Psoas muscle (tissue), 8 donors: ENCODE measurements at regions of chr12 and their contacts with region 1.

Region 1: GRCh38 chr12:107884769-107885694 is 110.5 kb downstream of the ASCL4 start:
- DNase-seq: peak in 1 of 2 donors; percentile 31
- ATAC-seq: no peak
- H3K4me3 ChIP-seq: no peak overlapping the region
- H3K27ac ChIP-seq: no peak overlapping the region
- H3K4me1 ChIP-seq: no peaks in the 10 kb centered on the region
- H3K27me3 ChIP-seq: peaks cover 0 to 3% (median 0%) of the 10 kb centered on the region in 3 donors
- CTCF ChIP-seq: peak; percentile 47

Region 2: DNA sequence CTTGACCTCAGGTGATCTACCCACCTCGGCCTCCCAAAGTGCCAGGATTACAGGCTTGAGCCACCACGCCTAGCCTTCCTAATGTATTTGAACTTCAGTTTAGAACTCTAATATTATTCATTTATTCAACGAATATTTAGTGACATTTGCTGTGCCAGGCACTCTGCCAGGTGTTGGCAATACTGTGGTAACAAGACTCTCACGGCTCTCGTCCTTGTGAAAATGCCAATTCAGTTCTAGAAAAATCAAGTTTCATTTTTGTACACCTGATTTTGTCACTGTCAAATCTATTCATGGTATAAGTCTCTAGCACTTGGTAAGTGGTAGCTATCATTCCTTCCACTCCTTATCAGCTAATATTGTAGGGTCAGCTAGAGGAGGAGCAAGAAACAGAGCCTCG is 205.7 kb before region 1 on chr12:
- intact Hi-C with region 1: loop called in 1 of 2 experiments (anchors 5 kb)
- DNase-seq: no peak
- ATAC-seq: no peak
- H3K4me3 ChIP-seq: no peak overlapping the region
- H3K27ac ChIP-seq: no peak overlapping the region
- H3K4me1 ChIP-seq: no peaks in the 10 kb centered on the region
- H3K27me3 ChIP-seq: peaks cover 0 to 13% (median 0%) of the 10 kb centered on the region in 3 donors
- CTCF ChIP-seq: no peak

Region 3: DNA sequence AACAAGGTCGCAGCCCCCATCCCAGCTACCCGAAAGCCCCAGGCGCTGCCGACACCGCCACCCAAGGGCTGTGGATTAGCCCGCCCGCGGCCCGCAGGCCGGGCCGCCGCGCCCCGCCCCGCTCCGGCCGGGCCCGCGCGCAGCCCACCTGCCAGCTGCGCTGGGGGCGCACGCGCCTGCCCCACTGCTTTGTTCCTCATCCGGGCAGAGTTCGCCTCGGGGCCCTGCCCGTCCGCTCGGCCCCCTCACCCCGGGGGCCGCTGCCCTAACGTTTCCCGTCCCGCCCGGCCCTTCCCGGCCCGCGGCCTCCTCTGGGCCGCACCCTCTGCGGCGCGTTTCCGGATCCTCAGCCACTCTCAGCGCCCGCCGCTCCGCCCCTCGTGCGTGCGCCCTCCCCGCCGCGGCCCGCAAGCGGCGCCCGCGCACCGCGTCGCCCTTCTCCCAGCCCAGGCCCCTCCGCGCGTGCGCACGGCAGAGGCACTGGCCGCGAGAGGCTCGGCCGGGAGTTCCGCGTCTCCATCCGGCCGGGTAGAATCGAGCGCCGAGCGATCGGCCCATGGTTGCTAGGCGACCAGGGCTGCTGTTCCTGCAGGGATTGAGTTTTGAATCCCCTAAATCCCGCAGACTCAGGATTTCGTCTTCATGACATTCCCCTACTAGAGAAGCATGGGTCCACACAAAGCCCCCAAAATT is 124.1 kb before region 1 on chr12 and contains the start of gene PRDM4:
- intact Hi-C with region 1: loop called in 1 of 2 experiments (anchors 10 kb)
- DNase-seq: peak; percentile 96 to 97
- ATAC-seq: peak; percentile 100
- H3K4me3 ChIP-seq: peak within 1 kb of the TSS; percentile 81
- H3K27ac ChIP-seq: peak within 1 kb of the TSS; percentile 77
- H3K4me1 ChIP-seq: peaks cover 22% of the 10 kb centered on the region
- H3K27me3 ChIP-seq: no peaks in the 10 kb centered on the region
- CTCF ChIP-seq: peak; percentile 36
- total RNA-seq, gene PRDM4: 11.3 to 15.7 (median 13.2) TPM

Region 4: DNA sequence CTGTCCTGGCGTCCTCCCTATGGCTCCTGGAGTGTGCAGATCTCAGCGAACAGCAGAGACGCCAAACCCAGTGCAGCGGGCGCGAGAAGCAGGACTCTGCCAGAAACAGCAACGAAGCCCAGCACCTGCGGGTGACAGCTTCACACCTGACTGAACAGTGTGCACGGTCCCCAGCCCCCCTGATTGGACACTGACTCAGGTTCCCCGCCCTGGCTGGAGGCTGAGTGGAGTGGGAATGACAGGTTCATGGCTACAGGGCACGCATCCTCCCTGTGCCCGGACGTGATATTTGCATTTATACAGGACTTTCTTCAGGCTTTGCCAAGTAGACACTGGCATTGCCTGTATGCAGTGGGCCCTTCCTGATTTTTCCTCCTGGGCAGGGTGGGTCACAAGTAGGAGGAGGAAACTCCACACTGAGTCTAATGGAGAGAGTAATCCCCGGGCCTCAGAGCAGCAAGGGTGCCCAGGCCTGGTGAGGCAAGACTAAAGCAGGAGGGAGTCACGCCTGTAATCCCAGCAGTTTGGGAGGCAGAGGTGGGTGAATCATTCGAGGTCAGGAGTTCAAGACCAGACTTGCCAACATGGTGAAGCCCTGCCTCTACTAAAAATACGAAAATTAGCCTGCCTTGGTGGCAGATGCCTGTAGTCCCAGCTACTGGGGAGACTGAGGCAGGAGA is 38.9 kb before region 1 on chr12:
- intact Hi-C with region 1: no loop called
- DNase-seq: no peak
- ATAC-seq: no peak
- H3K4me3 ChIP-seq: no peak overlapping the region
- H3K27ac ChIP-seq: no peak overlapping the region
- H3K4me1 ChIP-seq: no peaks in the 10 kb centered on the region
- H3K27me3 ChIP-seq: peaks cover 0 to 76% (median 23%) of the 10 kb centered on the region in 3 donors
- CTCF ChIP-seq: no peak

Region 5: GRCh38 chr12:108043750-108044533 is 158.9 kb after region 1 on chr12:
- intact Hi-C with region 1: no loop called
- DNase-seq: no peak
- ATAC-seq: no peak
- H3K4me3 ChIP-seq: no peak overlapping the region
- H3K27ac ChIP-seq: no peak overlapping the region
- H3K4me1 ChIP-seq: no peaks in the 10 kb centered on the region
- H3K27me3 ChIP-seq: peaks cover 0 to 3% (median 1%) of the 10 kb centered on the region in 3 donors
- CTCF ChIP-seq: no peak